ENCODE measurements at regions of chr2 and their contacts with region 1.

Region 1: GRCh38 chr2:222318026-222318711 is 19.4 kb upstream of the PAX3 start:
- DNase-seq: peak in 1 of 9 donors; percentile 64
- ATAC-seq: peak; percentile 59
- H3K4me3 ChIP-seq: peak overlapping the region; percentile 49
- H3K4me3 Mint-ChIP-seq: peak overlapping the region; percentile 34 to 93 (median 76)
- H3K27ac ChIP-seq: no peak overlapping the region
- H3K27ac Mint-ChIP-seq: peak overlapping the region in 1 of 9 donors; percentile 36
- H3K4me1 ChIP-seq: no peaks in the 10 kb centered on the region
- H3K4me1 Mint-ChIP-seq: peaks cover 5 to 21% (median 14%) of the 10 kb centered on the region in 7 donors
- H3K27me3 ChIP-seq: peaks cover 0 to 5% of the 10 kb centered on the region in 2 donors
- H3K27me3 Mint-ChIP-seq: peaks cover 66 to 76% (median 73%) of the 10 kb centered on the region in 5 donors

Region 2: GRCh38 chr2:222424729-222425671 is 106.8 kb after region 1 on chr2:
- CTCF ChIA-PET with region 1: no interaction called
- POLR2A ChIA-PET with region 1: no interaction called
- intact Hi-C with region 1: loop called (anchors 2 to 10 kb)
- DNase-seq: peak in 2 of 9 donors; percentile 9 to 48
- ATAC-seq: peak; percentile 54
- H3K4me3 ChIP-seq: peak overlapping the region; percentile 48
- H3K4me3 Mint-ChIP-seq: peak overlapping the region; percentile 48 to 90 (median 68)
- H3K27ac ChIP-seq: no peak overlapping the region
- H3K27ac Mint-ChIP-seq: peak overlapping the region in 1 of 9 donors; percentile 79
- H3K4me1 ChIP-seq: peaks cover 0 to 5% of the 10 kb centered on the region in 2 donors
- H3K4me1 Mint-ChIP-seq: peaks cover 7 to 43% (median 17%) of the 10 kb centered on the region in 7 donors
- H3K27me3 ChIP-seq: no peaks in the 10 kb centered on the region
- H3K27me3 Mint-ChIP-seq: peaks cover 46 to 72% (median 66%) of the 10 kb centered on the region in 5 donors

Region 3: DNA sequence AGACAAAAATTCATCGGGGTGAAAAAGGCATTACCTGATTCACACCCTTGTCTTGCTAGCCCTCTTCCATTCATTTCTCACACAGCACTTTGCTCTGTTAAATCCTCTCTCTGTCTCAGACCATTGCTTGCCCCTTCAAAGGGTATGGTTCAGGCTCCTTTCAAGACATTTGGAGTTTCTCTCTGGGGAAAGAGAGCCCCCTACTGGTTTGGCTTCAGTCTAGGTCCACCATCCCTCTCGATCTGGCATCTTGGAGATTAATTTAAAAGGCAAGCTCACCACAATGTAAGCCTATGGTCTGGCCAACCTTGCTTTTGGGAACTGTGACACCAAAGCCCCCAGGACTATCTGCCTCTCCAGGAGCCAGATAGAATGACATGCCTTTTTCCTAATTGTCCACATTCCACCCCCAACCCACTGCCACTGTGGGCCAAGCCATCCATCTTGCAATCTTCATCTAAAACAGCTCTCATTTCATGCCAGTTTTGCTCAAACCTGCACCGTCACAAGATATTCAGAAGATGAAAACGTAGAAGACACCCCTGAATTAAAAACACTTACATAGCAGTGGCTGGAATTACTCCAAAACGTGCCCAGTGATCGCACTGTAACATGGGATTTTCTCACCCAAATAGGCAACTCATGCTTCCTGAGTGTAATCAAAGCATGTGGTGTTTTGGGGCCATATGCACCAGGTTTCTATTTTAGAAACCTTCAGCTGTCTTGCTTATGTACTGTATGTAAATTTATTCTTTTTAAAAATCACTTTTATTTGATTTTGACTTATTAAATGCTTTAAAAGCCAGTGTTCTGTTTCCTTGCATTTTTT is 243.9 kb after region 1 on chr2:
- CTCF ChIA-PET with region 1: interaction called, 4 read pairs
- POLR2A ChIA-PET with region 1: no interaction called
- intact Hi-C with region 1: loop called in 1 of 2 experiments (anchors 1 kb)
- DNase-seq: peak in 1 of 9 donors; percentile 5
- ATAC-seq: peak; percentile 52
- H3K4me3 ChIP-seq: no peak overlapping the region
- H3K4me3 Mint-ChIP-seq: no peak overlapping the region
- H3K27ac ChIP-seq: no peak overlapping the region
- H3K27ac Mint-ChIP-seq: no peak overlapping the region
- H3K4me1 ChIP-seq: no peaks in the 10 kb centered on the region
- H3K4me1 Mint-ChIP-seq: peaks cover 0 to 2% (median 0%) of the 10 kb centered on the region in 7 donors
- H3K27me3 ChIP-seq: no peaks in the 10 kb centered on the region
- H3K27me3 Mint-ChIP-seq: peaks cover 0 to 2% (median 0%) of the 10 kb centered on the region in 5 donors

Region 4: GRCh38 chr2:222655787-222656525 is 337.8 kb after region 1 on chr2 and contains the start of gene FARSB:
- CTCF ChIA-PET with region 1: no interaction called
- POLR2A ChIA-PET with region 1: no interaction called
- intact Hi-C with region 1: loop called in 1 of 2 experiments (anchors 2 kb)
- DNase-seq: peak; percentile 86 to 98 (median 94)
- ATAC-seq: peak; percentile 96
- H3K4me3 ChIP-seq: peak within 1 kb of the TSS; percentile 82
- H3K4me3 Mint-ChIP-seq: peak within 1 kb of the TSS; percentile 95 to 100 (median 99)
- H3K27ac ChIP-seq: peak within 1 kb of the TSS; percentile 94
- H3K27ac Mint-ChIP-seq: peak within 1 kb of the TSS; percentile 98 to 100 (median 99)
- H3K4me1 ChIP-seq: peaks cover 18 to 20% of the 10 kb centered on the region in 2 donors
- H3K4me1 Mint-ChIP-seq: peaks cover 30 to 59% (median 45%) of the 10 kb centered on the region in 7 donors
- H3K27me3 ChIP-seq: no peaks in the 10 kb centered on the region
- H3K27me3 Mint-ChIP-seq: no peaks in the 10 kb centered on the region
- total RNA-seq, gene FARSB: 10.5 to 23.3 (median 13.8) TPM